Esophagus squamous epithelium (tissue), 5 donors: ENCODE measurements at regions of chr16 and their contacts with region 1.

Region 1: DNA sequence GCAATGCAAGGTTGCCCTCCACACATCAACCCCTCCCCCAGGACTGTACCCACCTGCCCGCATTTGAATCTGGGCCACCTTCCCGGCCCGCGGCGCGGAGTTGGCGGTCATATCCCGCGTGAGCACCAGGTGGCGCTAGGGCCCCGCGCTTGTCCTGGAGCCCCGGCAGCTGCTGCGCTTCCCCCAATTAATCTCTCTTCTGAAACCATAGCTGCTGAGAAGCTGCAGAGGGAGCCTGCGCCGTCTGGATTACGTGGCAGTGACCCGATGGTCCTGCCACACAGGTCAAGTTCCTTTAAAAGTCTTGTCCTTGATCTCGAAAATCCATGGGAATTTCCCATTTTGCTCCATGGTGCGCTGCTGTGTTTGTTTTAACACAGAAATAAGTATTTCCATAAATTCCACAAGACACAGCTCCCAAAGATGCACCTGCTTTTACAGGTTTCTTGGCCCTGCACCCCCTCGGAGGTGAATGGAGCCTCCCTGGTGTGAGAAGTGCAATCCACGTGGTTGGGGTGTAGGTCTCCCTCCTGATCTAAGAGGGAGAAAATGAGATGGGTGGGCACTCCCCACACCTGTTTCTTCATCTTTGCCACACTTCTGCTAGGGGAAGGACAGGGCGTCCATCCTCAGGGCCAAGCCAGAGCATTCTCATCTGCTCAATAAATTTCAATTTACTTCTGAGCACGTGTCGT is 22.1 kb downstream of the COX4I1 start:
- DNase-seq: no peak
- H3K4me3 ChIP-seq: no peak overlapping the region
- H3K27ac ChIP-seq: no peak overlapping the region
- H3K4me1 ChIP-seq: peaks cover 0 to 12% (median 0%) of the 10 kb centered on the region in 3 donors
- H3K27me3 ChIP-seq: peaks cover 0 to 42% (median 0%) of the 10 kb centered on the region in 4 donors
- CTCF ChIP-seq: peak; percentile 87 to 99 (median 96)
- POLR2A ChIP-seq: no peak

Region 2: DNA sequence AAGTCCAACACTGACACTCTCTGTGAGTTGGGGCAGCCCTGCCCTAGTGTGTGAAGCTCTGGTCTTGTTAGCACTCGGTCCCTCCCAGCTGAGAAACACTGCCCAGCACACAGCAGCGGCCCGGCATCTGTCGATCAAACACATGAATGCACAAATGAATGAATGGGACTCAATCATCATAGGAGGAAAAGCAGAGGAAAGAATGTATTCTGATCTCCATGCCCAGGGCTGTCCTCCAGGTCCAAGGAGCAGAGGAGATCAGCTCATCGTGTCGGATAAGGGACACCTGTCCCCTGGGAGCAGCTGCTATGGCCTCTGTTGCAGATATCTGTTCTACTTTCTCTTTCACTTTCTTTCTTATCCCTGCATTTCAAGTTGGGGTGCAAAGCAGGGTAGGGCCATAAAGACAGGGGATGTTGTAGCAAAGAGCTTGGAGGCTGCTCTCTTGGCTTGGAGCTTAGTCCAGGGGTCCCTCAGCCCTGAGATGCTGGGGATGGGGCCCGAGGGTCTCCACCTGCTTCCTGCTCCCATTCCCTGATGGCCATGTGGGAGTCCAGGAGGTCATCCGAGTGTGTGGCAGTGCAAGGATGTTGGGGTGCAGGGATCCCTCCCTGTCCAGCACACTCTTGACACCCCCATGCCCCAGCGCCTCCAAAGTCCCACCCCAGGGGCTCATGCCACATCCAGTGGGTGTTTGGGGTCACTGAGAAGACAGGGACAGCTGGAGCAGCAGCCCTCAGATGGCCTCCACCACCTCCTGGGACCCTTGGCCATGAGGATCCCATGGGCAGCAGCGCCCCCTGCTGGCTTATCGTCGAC is 165.6 kb after region 1 on chr16:
- intact Hi-C with region 1: loop called (anchors 10 kb)
- DNase-seq: no peak
- H3K4me3 ChIP-seq: peak overlapping the region in 2 of 4 donors; percentile 8 to 42
- H3K27ac ChIP-seq: no peak overlapping the region
- H3K4me1 ChIP-seq: peaks cover 0 to 12% (median 4%) of the 10 kb centered on the region in 3 donors
- H3K27me3 ChIP-seq: peaks cover 0 to 78% (median 0%) of the 10 kb centered on the region in 4 donors
- CTCF ChIP-seq: peak in 3 of 6 experiments; percentile 24 to 54 (median 29)
- POLR2A ChIP-seq: no peak

Region 3: DNA sequence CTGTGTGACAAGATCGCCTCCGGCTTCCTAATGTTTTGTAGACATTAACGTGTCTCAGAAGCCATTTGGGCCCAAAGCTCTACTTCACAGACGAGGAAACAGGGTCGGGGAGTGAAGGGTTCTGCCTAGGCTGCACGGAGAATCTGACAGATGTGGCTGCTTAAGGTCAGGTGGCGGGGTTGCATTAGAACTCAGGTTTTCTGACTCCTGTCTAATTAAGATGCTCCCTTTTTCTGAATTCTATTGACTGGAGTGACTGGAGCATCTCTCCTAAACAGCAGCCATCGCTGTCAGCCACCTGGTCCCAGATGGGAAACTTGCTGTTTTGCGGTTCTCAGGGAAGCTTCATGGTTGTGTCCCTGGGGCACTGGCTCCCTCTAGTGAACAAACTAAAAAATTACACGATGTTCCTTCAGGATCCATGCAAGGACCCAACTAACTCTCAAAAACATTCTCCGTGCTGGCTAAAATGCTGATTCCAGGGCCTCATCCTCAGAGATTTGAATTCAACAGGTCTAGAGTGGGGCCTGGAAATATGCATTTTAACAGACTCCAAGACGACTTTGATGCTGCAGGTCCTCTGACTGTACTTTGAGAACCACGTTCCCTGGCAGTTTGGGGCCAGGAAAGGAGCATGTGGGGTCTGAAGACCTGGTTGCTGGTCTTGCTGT is 194.7 kb after region 1 on chr16:
- intact Hi-C with region 1: loop called (anchors 5 kb)
- DNase-seq: no peak
- H3K4me3 ChIP-seq: no peak overlapping the region
- H3K27ac ChIP-seq: no peak overlapping the region
- H3K4me1 ChIP-seq: peaks cover 0 to 23% (median 8%) of the 10 kb centered on the region in 3 donors
- H3K27me3 ChIP-seq: peaks cover 0 to 52% (median 0%) of the 10 kb centered on the region in 4 donors
- CTCF ChIP-seq: peak; percentile 58 to 75 (median 64)
- POLR2A ChIP-seq: no peak

Region 4: GRCh38 chr16:86519649-86520316 is 698.2 kb after region 1 on chr16:
- intact Hi-C with region 1: loop called (anchors 10 kb)
- DNase-seq: no peak
- H3K4me3 ChIP-seq: peak overlapping the region in 3 of 4 donors; percentile 16 to 54 (median 16)
- H3K27ac ChIP-seq: peak overlapping the region in 3 of 4 donors; percentile 53 to 95 (median 63)
- H3K4me1 ChIP-seq: peaks cover 14 to 41% (median 16%) of the 10 kb centered on the region in 3 donors
- H3K27me3 ChIP-seq: peaks cover 0 to 93% (median 5%) of the 10 kb centered on the region in 4 donors
- CTCF ChIP-seq: peak; percentile 77 to 92 (median 85)
- POLR2A ChIP-seq: no peak